GM12878 (cell line): ENCODE measurements at regions of chr3 and their contacts with region 1.

Region 1: GRCh38 chr3:146326670-146327543 is 76.0 kb upstream of the PLSCR4 start:
- DNase-seq: no peak
- ATAC-seq: 0 out of 3 replicates have a peak, but pooled peaks have one; percentile 37
- H3K4me3 ChIP-seq: no peak overlapping the region
- H3K27ac ChIP-seq: no peak overlapping the region
- H3K4me1 ChIP-seq: no peaks in the 10 kb centered on the region
- H3K27me3 ChIP-seq: no peaks in the 10 kb centered on the region
- CTCF ChIP-seq: peak in 1 of 3 experiments; percentile 22; a peak in 2 of 6 replicates
- EP300 ChIP-seq: no peak
- POLR2A ChIP-seq: no peak
- RAD21 ChIP-seq: peak; percentile 24; the same call in 1 of the 2 replicates

Region 2: DNA sequence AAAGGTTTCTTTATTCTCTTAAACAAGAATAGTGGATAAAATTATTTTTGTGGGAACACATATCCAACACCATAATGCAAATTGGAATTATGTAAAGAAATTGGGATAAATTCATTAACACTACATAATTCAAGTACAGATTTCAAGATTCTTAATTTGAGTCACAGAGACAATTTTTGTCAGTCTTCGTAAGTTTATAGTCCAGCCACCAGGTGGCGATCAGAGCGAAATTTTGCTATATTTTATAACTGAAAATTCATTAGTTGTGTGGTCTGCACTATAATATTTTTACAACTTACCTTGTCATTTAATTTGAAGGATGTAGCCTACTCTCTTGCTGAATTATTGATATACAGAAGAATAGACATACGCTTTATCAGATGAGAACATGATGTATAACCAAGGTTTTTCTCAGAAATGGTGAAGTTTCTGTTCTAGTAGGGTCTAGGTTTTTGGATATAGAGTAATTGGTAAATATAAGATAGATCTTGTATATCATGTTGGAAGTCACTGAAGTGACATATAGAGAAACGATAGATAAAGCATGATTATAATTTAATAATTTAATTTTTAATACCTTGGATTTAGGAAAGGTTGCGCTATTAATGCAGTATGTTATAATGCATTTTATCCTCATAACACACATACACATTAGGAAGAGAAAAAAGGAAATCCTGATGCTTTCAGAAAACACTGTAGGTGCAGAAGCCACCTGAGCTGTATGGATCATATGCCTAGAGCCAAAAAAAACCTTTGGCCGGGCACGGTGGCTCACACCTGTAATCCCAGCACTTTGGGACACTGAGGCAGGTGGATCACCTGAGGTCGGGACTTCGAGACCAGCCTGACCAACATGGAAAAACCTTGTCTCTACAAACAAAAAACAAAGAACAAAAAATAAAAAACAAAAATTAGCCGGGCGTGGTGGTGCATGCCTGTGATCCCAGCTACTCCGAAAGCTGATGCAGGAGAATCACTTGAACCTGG is 107.7 kb before region 1 on chr3:
- CTCF ChIA-PET with region 1: interaction called, 5 read pairs
- POLR2A ChIA-PET with region 1: no interaction called
- RAD21 ChIA-PET with region 1: no interaction called
- SMC1A ChIA-PET with region 1: interaction called, 5 read pairs
- in situ Hi-C with region 1: no loop called
- intact Hi-C with region 1: loop called (anchors 5 kb)
- DNase-seq: no peak
- ATAC-seq: peak; percentile 44; the same call in 1 of the 3 replicates
- H3K4me3 ChIP-seq: no peak overlapping the region
- H3K27ac ChIP-seq: no peak overlapping the region
- H3K4me1 ChIP-seq: no peaks in the 10 kb centered on the region
- H3K27me3 ChIP-seq: no peaks in the 10 kb centered on the region
- CTCF ChIP-seq: peak; percentile 47 to 51 (median 50); a peak in 5 of 6 replicates
- EP300 ChIP-seq: no peak
- POLR2A ChIP-seq: no peak
- RAD21 ChIP-seq: peak; percentile 53